HepG2 (cell line): ENCODE measurements at regions of chr1 and their contacts with region 1.

Region 1: DNA sequence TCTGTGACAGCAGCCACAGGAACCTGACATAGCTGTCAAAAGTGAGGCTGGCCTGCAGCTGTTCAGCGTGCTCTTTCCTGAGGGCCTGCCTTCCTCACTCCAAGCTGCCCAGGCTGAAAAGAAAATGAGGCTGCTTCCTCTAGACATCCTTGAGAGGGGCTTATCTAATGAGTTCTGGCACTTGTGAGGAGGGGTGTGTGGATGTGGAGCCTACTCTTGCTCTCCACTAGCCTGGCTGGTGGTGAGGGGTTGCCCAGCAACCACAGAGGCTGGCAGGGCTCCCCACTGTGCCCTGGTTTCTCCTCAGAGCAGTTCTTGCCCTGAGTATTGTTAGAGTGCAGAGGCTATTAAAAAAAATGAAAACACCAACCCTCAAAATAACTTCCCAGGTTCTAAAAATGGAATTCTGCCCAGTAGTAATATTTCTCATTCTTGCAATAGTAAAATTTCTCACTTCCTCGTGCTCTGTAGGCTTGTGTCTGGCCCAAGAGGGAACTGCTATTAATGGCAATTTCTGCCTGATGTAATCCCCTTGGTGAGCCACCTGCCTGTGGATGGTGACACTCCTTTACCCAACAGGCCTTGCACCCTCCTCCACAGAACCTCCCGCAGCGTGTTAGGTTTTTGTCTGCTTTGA is 52.6 kb upstream of the EPS8L3 start:
- DNase-seq: no peak
- ATAC-seq: no peak
- H3K4me3 ChIP-seq: no peak overlapping the region
- H3K27ac ChIP-seq: no peak overlapping the region
- H3K4me1 ChIP-seq: peaks cover 22% of the 10 kb centered on the region
- H3K27me3 ChIP-seq: peaks cover 0 to 3% of the 10 kb centered on the region in 2 experiments; a peak in 1 of 5 replicates
- CTCF ChIP-seq: no peak
- EP300 ChIP-seq: no peak
- POLR2A ChIP-seq: no peak
- RAD21 ChIP-seq: no peak

Region 2: DNA sequence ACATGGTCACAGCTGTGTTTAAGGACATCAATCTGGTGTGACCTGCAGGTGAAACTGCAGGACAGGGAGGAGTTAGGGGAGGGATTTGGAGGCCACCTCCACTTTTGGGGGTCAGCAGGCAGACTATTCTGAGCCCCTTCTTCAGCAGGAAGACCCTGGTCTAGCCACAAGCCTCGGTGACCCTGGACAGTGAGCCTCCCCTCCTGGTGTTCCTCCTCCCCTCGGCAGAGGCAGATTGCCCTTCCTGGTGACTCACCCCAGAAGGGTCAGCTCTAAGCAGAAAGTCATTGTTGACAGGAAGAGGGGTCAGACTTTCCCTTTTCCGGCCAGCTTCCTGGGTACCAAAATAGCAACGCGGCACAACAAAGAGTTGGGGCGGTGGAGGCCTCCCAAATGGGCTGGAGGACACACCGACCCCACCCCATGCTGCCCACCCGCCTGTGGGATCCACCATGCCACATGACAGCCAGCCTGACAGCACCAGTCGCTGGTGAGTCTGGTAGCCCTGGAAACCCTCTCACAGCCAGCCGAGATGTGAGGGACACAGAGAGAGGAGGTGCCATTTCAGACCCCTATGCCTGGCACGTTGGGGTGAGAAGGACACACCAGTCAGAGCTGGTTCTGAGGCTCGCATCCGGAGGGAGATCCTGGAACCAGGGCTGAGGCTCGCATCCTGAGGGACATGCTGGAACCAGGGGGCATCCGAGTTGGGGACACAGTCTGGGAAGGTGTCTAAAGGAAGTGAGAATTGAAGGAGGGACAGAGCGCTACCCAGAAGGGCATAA is 79.6 kb after region 1 on chr1:
- CTCF ChIA-PET with region 1: no interaction called
- POLR2A ChIA-PET with region 1: no interaction called
- in situ Hi-C with region 1: loop called (anchors 5 kb)
- intact Hi-C with region 1: no loop called
- DNase-seq: peak; percentile 88
- ATAC-seq: peak; percentile 86
- H3K4me3 ChIP-seq: peak overlapping the region in 2 of 3 experiments; percentile 16 to 44; a peak in 4 of 6 replicates
- H3K27ac ChIP-seq: peak overlapping the region; percentile 48
- H3K4me1 ChIP-seq: peaks cover 100% of the 10 kb centered on the region
- H3K27me3 ChIP-seq: peaks cover 0 to 2% of the 10 kb centered on the region in 2 experiments; a peak in 1 of 5 replicates
- CTCF ChIP-seq: no peak; the same call in 1 of the 2 replicates
- EP300 ChIP-seq: peak; percentile 44 to 91; a peak in 2 of 4 replicates
- POLR2A ChIP-seq: no peak
- RAD21 ChIP-seq: no peak

Region 3: DNA sequence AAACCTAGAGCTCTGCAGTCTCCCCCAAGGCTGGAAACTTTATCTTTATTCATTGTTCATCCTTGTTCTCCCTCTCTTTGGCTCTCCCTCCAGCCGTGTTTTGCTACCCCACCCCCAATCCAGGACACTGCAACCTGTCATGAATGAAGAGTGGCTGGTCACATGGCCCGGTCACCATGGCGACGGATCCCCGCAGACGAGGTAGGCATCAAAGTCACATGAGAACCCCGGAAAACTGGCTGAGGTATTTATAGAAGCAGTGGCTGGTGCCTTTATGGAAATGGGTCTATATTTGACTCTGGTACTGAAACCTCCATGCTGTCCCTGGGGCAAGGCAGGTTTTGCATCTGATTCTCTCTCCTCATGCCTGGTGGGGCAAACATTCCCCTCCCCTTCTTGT is 320.6 kb after region 1 on chr1:
- CTCF ChIA-PET with region 1: no interaction called
- POLR2A ChIA-PET with region 1: no interaction called
- in situ Hi-C with region 1: no loop called
- intact Hi-C with region 1: no loop called
- DNase-seq: peak; percentile 4
- ATAC-seq: no peak
- H3K4me3 ChIP-seq: no peak overlapping the region
- H3K27ac ChIP-seq: no peak overlapping the region
- H3K4me1 ChIP-seq: no peaks in the 10 kb centered on the region
- H3K27me3 ChIP-seq: peaks cover 0 to 29% of the 10 kb centered on the region in 2 experiments; a peak in 3 of 5 replicates
- CTCF ChIP-seq: no peak
- EP300 ChIP-seq: no peak
- POLR2A ChIP-seq: no peak
- RAD21 ChIP-seq: no peak